ENCODE measurements at regions of chr3 and their contacts with region 1.

Region 1: DNA sequence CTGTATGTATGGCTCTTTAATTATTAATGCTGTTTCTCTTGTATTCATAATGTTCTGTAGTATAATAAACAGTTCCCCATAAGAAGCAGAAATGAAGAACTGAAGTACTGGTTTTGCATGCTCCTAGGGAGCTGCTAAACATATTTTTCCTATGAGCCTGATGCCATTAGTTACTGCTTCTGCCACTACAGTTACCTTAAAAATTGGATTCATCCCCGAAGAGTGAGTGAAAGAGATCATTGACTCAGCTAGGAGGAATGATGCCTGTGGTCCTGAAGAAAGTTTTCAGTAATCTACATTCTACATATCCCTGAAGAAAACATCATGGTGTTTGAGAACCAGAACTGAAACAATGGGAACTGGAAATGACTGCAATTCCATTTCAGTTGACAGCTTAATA is 37.1 kb upstream of the ST3GAL6 start:
- DNase-seq: no peak
- H3K4me3 ChIP-seq: no peak overlapping the region
- H3K27ac ChIP-seq: peak overlapping the region; percentile 14 to 24; a peak in 3 of 4 replicates
- H3K4me1 ChIP-seq: peaks cover 0 to 7% of the 10 kb centered on the region in 2 experiments; a peak in 3 of 4 replicates
- H3K27me3 ChIP-seq: no peaks in the 10 kb centered on the region
- CTCF ChIP-seq: no peak
- EP300 ChIP-seq: no peak
- RAD21 ChIP-seq: no peak

Region 2: DNA sequence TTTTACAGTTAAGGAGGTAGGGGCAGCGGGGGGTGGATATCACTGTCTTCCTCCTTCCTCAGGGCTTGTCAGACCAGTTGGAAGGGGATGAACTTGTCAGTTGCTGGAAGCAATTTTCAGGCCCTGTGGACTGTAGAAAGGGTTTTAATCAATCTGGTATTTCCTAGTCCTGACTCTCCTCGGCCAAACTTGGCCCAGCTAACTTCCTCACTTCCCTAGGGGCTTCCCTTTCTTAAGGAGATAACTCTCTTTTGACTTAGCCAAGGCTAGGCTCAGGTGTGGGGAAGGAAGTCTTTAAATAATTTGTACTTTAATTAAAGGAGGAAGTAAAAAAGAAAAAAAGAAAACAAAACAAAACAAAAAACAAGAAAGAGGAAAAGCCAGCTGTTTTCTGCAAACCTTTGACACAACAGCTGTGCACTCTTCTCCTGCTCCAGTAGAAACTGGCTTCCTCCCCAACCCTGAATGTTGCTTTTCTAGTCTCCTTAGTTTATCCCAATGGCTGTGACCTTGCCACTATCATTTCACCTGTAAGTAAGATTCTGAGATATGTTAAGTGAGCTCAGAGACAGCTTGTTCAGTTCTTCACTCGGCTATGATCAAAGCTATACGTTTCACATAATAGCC is 15.9 kb before region 1 on chr3:
- CTCF ChIA-PET with region 1: interaction called, 10 read pairs
- POLR2A ChIA-PET with region 1: no interaction called
- DNase-seq: no peak
- H3K4me3 ChIP-seq: no peak overlapping the region
- H3K27ac ChIP-seq: no peak overlapping the region
- H3K4me1 ChIP-seq: peaks cover 4 to 6% of the 10 kb centered on the region in 2 experiments; a peak in 2 of 4 replicates
- H3K27me3 ChIP-seq: no peaks in the 10 kb centered on the region
- CTCF ChIP-seq: no peak
- EP300 ChIP-seq: no peak
- RAD21 ChIP-seq: no peak

Measured in SK-N-SH (cell line).